PC-9 (cell line): ENCODE measurements at regions of chrX and their contacts with region 1.

Region 1: DNA sequence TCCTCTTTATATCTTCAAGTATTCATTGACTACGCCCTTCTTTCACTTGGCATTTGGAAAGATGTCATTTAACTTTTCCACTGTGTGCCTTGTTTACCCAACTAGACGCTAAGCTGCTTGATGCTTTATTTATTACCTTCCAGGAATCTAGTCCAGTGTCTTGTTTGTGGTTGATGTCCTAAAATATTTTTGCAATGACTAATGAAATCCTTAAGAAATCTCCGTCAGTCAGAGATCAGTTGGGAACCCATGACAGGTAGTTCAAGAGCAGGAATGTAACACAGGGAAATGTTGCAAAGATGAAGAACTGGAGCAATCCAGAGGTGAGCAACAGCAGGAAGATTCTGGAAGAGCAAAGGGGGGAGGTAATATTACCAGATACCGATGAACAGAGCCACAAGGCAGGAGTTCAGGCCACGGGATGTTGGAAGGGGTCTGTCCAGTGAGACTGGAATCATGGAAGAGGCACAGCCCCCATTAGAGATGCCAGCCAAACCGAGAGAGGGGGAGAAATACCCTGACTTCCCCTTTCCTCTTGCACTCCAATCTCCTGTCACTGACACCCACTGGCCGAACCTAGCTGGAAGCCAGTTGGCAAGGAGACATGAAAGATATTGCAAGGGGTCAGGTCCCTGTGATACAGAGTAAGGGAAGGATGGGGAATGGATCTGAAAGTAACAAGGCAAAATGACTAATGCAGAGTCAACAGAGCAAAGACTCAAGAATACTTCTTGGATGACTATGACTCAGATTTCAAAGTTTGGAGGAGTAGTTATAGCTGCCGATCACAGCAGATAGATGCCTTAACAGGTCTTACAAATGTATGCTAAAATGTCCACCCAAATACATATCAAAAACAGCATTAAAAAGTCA is 62.7 kb upstream of the PHKA2 start:
- DNase-seq: peak; percentile 6 to 86
- H3K4me3 ChIP-seq: no peak overlapping the region
- H3K27ac ChIP-seq: peak overlapping the region; percentile 72
- H3K4me1 ChIP-seq: peaks cover 30% of the 10 kb centered on the region
- H3K27me3 ChIP-seq: no peaks in the 10 kb centered on the region
- CTCF ChIP-seq: no peak

Region 2: DNA sequence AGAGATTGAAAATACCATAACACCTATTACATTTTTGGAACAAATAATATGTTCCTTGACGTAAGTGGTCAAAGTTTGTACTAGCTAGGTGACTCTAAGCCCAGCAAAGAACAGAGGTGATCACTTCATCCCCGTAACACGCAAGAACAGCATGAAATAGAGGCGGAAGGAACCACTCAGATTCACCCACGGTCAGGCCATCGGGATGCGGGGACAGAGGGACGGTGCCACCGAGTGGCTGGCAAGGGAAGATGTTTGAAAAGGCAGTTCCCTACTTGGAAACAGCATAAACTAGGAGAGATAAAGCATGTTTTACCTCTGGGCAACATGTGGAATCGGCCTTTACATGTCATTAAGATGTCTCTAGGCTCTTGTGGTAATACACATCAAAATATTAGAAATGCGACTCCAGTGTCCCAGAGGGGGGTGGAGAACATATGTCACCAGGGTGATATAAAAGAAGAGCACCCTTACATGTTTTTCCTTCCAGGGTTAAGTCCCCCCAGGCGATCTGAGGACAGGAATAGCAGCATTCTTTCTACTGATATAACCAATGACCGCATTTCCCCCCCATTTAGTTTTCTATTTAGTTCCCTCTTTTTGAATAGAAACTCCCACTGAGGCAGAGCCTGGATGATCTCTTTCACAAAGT is 146.7 kb before region 1 on chrX:
- CTCF ChIA-PET with region 1: no interaction called
- POLR2A ChIA-PET with region 1: no interaction called
- intact Hi-C with region 1: no loop called
- DNase-seq: peak in 1 of 2 experiments; percentile 15
- H3K4me3 ChIP-seq: no peak overlapping the region
- H3K27ac ChIP-seq: no peak overlapping the region
- H3K4me1 ChIP-seq: no peaks in the 10 kb centered on the region
- H3K27me3 ChIP-seq: no peaks in the 10 kb centered on the region
- CTCF ChIP-seq: peak; percentile 45; the same call in 1 of the 2 replicates

Region 3: GRCh38 chrX:18984381-18985185 is 62.0 kb before region 1 on chrX:
- CTCF ChIA-PET with region 1: no interaction called
- POLR2A ChIA-PET with region 1: interaction called, 4 read pairs
- intact Hi-C with region 1: loop called (anchors 2 kb)
- DNase-seq: peak; percentile 72 to 85
- H3K4me3 ChIP-seq: peak overlapping the region; percentile 93
- H3K27ac ChIP-seq: peak overlapping the region; percentile 76
- H3K4me1 ChIP-seq: peaks cover 14% of the 10 kb centered on the region
- H3K27me3 ChIP-seq: no peaks in the 10 kb centered on the region
- CTCF ChIP-seq: peak; percentile 52; the same call in 1 of the 2 replicates

Region 4: GRCh38 chrX:18994738-18995137 is 51.8 kb before region 1 on chrX:
- CTCF ChIA-PET with region 1: no interaction called
- POLR2A ChIA-PET with region 1: no interaction called
- intact Hi-C with region 1: no loop called
- DNase-seq: peak in 1 of 2 experiments; percentile 85
- H3K4me3 ChIP-seq: peak overlapping the region; percentile 39
- H3K27ac ChIP-seq: peak overlapping the region; percentile 98
- H3K4me1 ChIP-seq: peaks cover 44% of the 10 kb centered on the region
- H3K27me3 ChIP-seq: no peaks in the 10 kb centered on the region
- CTCF ChIP-seq: no peak

Region 5: GRCh38 chrX:19107035-19107434 is 60.5 kb after region 1 on chrX:
- CTCF ChIA-PET with region 1: no interaction called
- POLR2A ChIA-PET with region 1: no interaction called
- intact Hi-C with region 1: loop called (anchors 1 kb)
- DNase-seq: no peak
- H3K4me3 ChIP-seq: no peak overlapping the region
- H3K27ac ChIP-seq: no peak overlapping the region
- H3K4me1 ChIP-seq: no peaks in the 10 kb centered on the region
- H3K27me3 ChIP-seq: no peaks in the 10 kb centered on the region
- CTCF ChIP-seq: no peak